ENCODE measurements at regions of chr18 and their contacts with region 1.

Region 1: GRCh38 chr18:62714671-62715435 is 488 bp upstream of the PHLPP1 start:
- DNase-seq: peak; percentile 99
- H3K4me3 ChIP-seq: peak overlapping the region; percentile 73 to 93 (median 86)
- H3K27ac ChIP-seq: peak overlapping the region; percentile 53
- H3K4me1 ChIP-seq: peaks cover 10% of the 10 kb centered on the region
- H3K27me3 ChIP-seq: no peaks in the 10 kb centered on the region
- CTCF ChIP-seq: peak; percentile 62 to 87

Region 2: DNA sequence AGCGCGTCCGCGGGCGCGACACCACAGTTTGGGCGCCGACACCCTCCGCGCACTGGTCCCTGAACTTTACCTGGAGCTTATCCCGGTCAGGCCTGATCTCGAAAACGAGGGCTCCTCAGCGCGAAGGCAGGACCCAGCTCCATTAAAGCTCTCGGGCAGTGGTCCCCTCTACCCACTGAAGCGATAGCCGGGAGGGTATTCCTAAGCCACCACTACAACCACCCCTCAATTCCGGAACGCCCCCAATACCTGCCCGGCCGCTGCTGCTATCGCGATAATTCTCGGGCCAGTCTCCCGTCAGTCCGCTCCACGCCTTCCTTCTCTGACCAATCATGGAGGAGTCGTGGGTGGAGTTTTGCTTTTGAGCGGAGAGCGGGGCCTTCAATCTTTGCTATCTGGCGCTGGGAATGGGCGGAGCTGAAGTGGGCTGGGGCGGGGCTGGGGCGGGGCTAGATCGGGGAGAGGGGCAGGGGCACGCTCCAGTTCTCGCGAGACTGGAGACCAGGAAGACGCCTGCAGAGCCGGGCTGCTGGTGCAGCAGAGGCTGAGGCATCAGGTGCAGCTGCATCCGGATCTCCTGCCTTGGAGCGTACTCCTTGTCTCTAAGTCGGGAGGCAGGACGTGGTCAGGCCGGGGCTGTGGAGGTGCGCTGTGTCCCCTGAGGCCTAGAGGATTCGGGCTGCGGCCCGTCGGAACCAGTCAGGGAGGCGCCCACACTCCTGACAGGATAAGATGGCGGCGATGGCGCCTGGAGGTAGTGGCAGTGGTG is 527.9 kb before region 1 on chr18 and contains the starts of genes PIGN and RELCH:
- CTCF ChIA-PET with region 1: interaction called, 10 read pairs
- dilution Hi-C with region 1: no loop called
- in situ Hi-C with region 1: no loop called
- intact Hi-C with region 1: loop called (anchors 10 kb)
- DNase-seq: peak; percentile 99
- H3K4me3 ChIP-seq: peak within 1 kb of the TSS; percentile 73 to 98 (median 80)
- H3K27ac ChIP-seq: peak within 1 kb of the TSS; percentile 68
- H3K4me1 ChIP-seq: no peaks in the 10 kb centered on the region
- H3K27me3 ChIP-seq: no peaks in the 10 kb centered on the region
- CTCF ChIP-seq: no peak
- total RNA-seq, gene PIGN: 46.3 to 49.5 TPM
- total RNA-seq, gene RELCH: 24.6 to 36.5 TPM

Region 3: DNA sequence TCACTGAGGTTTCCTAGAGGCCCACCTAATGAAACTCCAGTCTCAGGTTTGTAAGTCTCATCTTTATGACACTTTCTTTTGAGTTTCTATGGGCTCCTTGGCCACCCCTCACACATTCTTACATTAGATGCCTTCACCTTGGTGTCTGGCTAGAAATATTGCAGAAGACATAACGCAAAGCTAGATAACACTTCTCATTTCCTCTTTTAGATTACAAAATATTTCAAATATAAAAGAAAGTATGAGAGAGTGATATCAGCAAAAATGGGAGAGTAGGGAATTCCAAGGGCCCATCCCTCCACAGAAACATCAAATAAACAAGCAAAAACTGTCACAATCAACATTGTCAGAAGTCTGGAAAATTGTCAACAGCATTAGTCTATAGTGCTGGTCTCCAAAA is 235.3 kb before region 1 on chr18:
- CTCF ChIA-PET with region 1: no interaction called
- dilution Hi-C with region 1: no loop called
- in situ Hi-C with region 1: no loop called
- intact Hi-C with region 1: no loop called
- DNase-seq: no peak
- H3K4me3 ChIP-seq: no peak overlapping the region
- H3K27ac ChIP-seq: no peak overlapping the region
- H3K4me1 ChIP-seq: no peaks in the 10 kb centered on the region
- H3K27me3 ChIP-seq: no peaks in the 10 kb centered on the region
- CTCF ChIP-seq: no peak

Region 4: GRCh38 chr18:62522504-62523254 is 192.2 kb before region 1 on chr18 and contains the start of gene ZCCHC2:
- CTCF ChIA-PET with region 1: no interaction called
- dilution Hi-C with region 1: no loop called
- in situ Hi-C with region 1: no loop called
- intact Hi-C with region 1: loop called (anchors 5 kb)
- DNase-seq: peak; percentile 98
- H3K4me3 ChIP-seq: peak within 1 kb of the TSS; percentile 96 to 97 (median 96)
- H3K27ac ChIP-seq: peak within 1 kb of the TSS; percentile 83
- H3K4me1 ChIP-seq: peaks cover 25% of the 10 kb centered on the region
- H3K27me3 ChIP-seq: no peaks in the 10 kb centered on the region
- CTCF ChIP-seq: no peak
- total RNA-seq, gene ZCCHC2: 13.7 to 16.2 TPM

Region 5: DNA sequence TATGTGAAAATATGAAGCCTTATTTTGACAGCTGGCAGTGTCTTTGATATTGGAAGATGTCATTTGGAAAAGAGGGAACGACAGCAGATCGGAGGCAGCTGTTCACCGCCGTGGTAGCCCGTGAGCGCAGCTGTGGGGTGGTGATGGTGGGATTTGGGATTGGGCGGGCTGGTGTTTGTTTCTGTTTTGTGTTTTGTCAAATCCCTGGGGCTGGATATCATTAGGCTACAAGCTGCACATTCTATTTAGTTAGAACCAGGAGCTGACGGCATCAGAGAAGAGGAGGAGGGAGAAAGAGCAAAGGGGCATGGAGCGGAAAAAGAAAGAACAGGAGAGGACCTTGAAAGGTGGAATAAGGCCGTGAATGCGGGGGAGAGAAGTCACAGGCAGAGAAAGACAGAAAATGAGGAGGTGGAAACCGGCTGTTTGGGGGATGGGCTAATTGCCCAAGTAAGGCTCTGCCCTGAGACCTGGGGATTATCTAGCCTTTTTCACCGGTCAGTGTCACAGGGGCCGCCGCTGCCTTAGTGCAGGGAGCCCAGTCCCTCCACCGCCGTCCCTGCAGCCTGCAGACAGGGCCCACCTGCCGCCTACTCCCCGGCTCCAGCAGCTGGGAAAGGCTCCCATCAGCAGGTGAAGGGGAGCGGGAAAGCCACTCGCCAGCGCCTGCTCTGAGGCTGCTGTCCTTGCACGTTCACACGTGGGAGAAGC is 104.0 kb before region 1 on chr18:
- CTCF ChIA-PET with region 1: no interaction called
- dilution Hi-C with region 1: no loop called
- in situ Hi-C with region 1: no loop called
- intact Hi-C with region 1: no loop called
- DNase-seq: no peak
- H3K4me3 ChIP-seq: no peak overlapping the region
- H3K27ac ChIP-seq: no peak overlapping the region
- H3K4me1 ChIP-seq: no peaks in the 10 kb centered on the region
- H3K27me3 ChIP-seq: peaks cover 2% of the 10 kb centered on the region
- CTCF ChIP-seq: no peak

Region 6: GRCh38 chr18:62744076-62744968 is 29.5 kb after region 1 on chr18:
- CTCF ChIA-PET with region 1: interaction called, 26 read pairs
- dilution Hi-C with region 1: no loop called
- in situ Hi-C with region 1: no loop called
- intact Hi-C with region 1: no loop called
- DNase-seq: no peak
- H3K4me3 ChIP-seq: no peak overlapping the region
- H3K27ac ChIP-seq: no peak overlapping the region
- H3K4me1 ChIP-seq: peaks cover 8% of the 10 kb centered on the region
- H3K27me3 ChIP-seq: no peaks in the 10 kb centered on the region
- CTCF ChIP-seq: no peak

Region 7: GRCh38 chr18:62784966-62785413 is 70.1 kb after region 1 on chr18:
- CTCF ChIA-PET with region 1: no interaction called
- dilution Hi-C with region 1: no loop called
- in situ Hi-C with region 1: no loop called
- intact Hi-C with region 1: loop called (anchors 1 kb)
- DNase-seq: no peak
- H3K4me3 ChIP-seq: no peak overlapping the region
- H3K27ac ChIP-seq: peak overlapping the region; percentile 11
- H3K4me1 ChIP-seq: peaks cover 41% of the 10 kb centered on the region
- H3K27me3 ChIP-seq: no peaks in the 10 kb centered on the region
- CTCF ChIP-seq: no peak

Region 8: DNA sequence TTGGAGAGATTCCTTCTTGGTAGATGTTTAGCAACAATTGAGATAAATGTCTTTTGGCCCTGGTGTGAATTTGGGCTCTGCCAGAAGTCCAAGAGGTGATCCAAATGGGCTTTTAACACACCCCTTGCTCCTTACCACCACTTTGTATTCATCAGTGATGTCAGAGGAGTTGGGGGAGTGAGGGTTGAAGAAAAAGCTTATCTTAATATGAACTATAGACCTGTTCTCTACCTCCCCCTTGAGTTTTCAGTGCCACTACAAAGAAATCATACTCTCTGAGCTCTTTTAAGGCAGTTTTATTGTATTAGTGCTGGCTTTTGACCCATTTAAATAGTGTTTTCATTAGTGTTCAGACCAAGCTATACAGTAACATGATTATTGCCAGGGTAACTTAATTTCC is 229.6 kb after region 1 on chr18:
- CTCF ChIA-PET with region 1: no interaction called
- dilution Hi-C with region 1: no loop called
- in situ Hi-C with region 1: no loop called
- intact Hi-C with region 1: loop called (anchors 5 kb)
- DNase-seq: no peak
- H3K4me3 ChIP-seq: no peak overlapping the region
- H3K27ac ChIP-seq: no peak overlapping the region
- H3K4me1 ChIP-seq: peaks cover 12% of the 10 kb centered on the region
- H3K27me3 ChIP-seq: no peaks in the 10 kb centered on the region
- CTCF ChIP-seq: no peak